Transverse colon (tissue), 4 donors: ENCODE measurements at regions of chr14 and their contacts with region 1.

Region 1: GRCh38 chr14:93655078-93655750 is 133.1 kb downstream of the PRIMA1 start:
- DNase-seq: no peak
- H3K4me3 ChIP-seq: no peak overlapping the region
- H3K27ac ChIP-seq: no peak overlapping the region
- H3K4me1 ChIP-seq: no peaks in the 10 kb centered on the region
- H3K27me3 ChIP-seq: peaks cover 5% of the 10 kb centered on the region
- CTCF ChIP-seq: peak; percentile 36 to 55 (median 50)
- EP300 ChIP-seq: no peak
- POLR2A ChIP-seq: no peak

Region 2: GRCh38 chr14:93788543-93789227 is 133.5 kb after region 1 on chr14:
- in situ Hi-C with region 1: no loop called
- intact Hi-C with region 1: loop called (anchors 2 kb)
- DNase-seq: peak; percentile 29
- H3K4me3 ChIP-seq: peak overlapping the region; percentile 34 to 63 (median 52)
- H3K27ac ChIP-seq: peak overlapping the region; percentile 78 to 92 (median 84)
- H3K4me1 ChIP-seq: peaks cover 6 to 14% (median 10%) of the 10 kb centered on the region in 4 donors
- H3K27me3 ChIP-seq: peaks cover 33% of the 10 kb centered on the region
- CTCF ChIP-seq: peak in 3 of 5 experiments; percentile 21 to 47 (median 28)
- EP300 ChIP-seq: no peak
- POLR2A ChIP-seq: no peak

Region 3: GRCh38 chr14:93880021-93880820 is 225.0 kb after region 1 on chr14:
- in situ Hi-C with region 1: loop called in 3 of 4 experiments (anchors 10 to 25 kb)
- intact Hi-C with region 1: no loop called
- DNase-seq: no peak
- H3K4me3 ChIP-seq: no peak overlapping the region
- H3K27ac ChIP-seq: no peak overlapping the region
- H3K4me1 ChIP-seq: peaks cover 0 to 11% (median 2%) of the 10 kb centered on the region in 4 donors
- H3K27me3 ChIP-seq: no peaks in the 10 kb centered on the region
- CTCF ChIP-seq: no peak
- EP300 ChIP-seq: no peak
- POLR2A ChIP-seq: no peak

Region 4: DNA sequence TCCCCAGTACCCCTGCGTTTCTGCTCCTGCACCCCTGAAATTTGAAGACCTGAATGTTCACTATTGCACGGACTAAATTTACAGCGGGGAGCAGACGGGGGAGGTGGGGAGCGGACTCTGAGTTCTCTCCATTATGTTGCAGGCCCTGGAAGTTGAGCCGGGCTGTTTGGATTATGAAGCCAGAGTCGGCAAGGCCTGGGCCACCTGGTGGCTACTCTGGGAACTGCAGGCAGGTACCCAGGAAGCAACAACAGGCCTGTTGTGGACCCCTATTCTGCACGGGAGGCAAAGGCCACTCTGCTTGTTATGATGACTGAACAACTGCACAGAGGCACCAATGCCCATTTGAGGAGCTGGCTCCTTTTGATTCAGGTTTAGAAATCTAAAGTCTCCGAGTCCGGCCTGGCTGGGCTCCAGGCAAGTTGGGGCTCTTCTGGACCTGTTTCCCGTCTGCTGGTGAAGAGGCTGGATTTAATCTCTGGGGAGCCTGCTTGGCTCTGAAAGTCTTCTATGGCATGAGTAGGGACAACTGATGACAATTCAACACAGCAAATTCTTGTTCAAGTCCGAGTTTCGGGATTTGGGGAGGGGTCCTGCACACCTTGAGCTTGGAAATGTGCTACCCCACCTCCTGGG is 237.8 kb after region 1 on chr14:
- in situ Hi-C with region 1: loop called in 3 of 4 experiments (anchors 10 to 25 kb)
- intact Hi-C with region 1: loop called (anchors 5 kb)
- DNase-seq: peak; percentile 68
- H3K4me3 ChIP-seq: no peak overlapping the region
- H3K27ac ChIP-seq: peak overlapping the region in 2 of 4 donors; percentile 20 to 33
- H3K4me1 ChIP-seq: peaks cover 0 to 5% (median 2%) of the 10 kb centered on the region in 4 donors
- H3K27me3 ChIP-seq: no peaks in the 10 kb centered on the region
- CTCF ChIP-seq: peak; percentile 89 to 99 (median 99)
- EP300 ChIP-seq: no peak
- POLR2A ChIP-seq: no peak

Region 5: DNA sequence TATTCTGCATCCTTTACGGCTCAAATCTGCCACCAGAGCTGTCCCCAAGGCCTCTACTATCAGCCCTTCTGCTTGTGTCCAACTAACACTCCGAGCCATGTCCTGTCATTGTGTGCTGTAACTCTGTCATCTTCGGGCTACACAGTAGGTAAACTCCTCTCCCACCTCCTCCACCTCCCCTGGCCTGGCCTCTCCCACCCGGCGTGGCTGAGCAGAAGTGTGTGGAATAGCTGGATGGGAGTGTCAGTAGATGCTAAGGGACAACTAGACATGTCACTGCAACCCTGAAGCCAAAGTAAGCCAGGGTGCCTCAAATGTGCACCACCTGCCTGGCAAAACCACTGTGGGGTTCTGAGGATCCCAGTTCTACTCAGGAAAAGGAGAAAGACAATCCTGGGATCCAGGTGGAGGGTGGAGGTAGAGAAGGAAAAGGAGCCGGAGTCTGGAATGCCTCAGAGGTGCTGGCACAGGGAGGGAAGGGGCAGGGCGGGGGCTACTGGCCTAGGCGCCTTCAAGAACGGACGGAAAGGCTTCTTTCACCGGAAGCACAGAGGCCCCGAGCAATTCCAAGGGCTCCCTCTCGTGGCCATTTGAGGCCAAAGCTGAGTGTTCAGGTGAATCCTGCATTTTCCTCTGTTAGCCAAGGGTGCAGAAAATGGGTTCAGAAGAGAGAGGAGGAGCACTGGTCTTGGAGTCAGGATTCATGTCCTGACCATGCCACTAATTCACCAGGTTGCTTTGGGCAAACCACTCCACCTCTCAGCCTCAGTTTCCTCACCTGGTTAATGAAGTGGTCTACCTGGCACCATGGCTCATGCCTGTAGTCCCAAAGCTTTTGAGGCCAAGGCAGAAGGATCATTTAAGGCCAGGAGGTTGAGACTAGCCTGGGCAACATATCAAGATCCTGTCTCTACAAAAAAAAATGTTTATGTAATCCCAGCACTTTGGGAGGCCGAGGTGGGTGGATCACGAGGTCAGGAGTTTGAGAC is 251.4 kb after region 1 on chr14:
- in situ Hi-C with region 1: loop called in 1 of 4 experiments (anchors 10 kb)
- intact Hi-C with region 1: no loop called
- DNase-seq: peak; percentile 56
- H3K4me3 ChIP-seq: no peak overlapping the region
- H3K27ac ChIP-seq: no peak overlapping the region
- H3K4me1 ChIP-seq: peaks cover 0 to 3% (median 0%) of the 10 kb centered on the region in 4 donors
- H3K27me3 ChIP-seq: peaks cover 8% of the 10 kb centered on the region
- CTCF ChIP-seq: peak; percentile 48 to 71 (median 64)
- EP300 ChIP-seq: no peak
- POLR2A ChIP-seq: no peak